ENCODE measurements at regions of chr15 and their contacts with region 1.

Region 1: GRCh38 chr15:56732921-56733797 is at the start of gene ZNF280D:
- DNase-seq: peak; percentile 73
- ATAC-seq: peak; percentile 84
- H3K4me3 ChIP-seq: peak within 1 kb of the TSS; percentile 95
- H3K27ac ChIP-seq: peak within 1 kb of the TSS; percentile 65
- H3K4me1 ChIP-seq: peaks cover 25% of the 10 kb centered on the region
- H3K27me3 ChIP-seq: no peaks in the 10 kb centered on the region
- CTCF ChIP-seq: no peak
- total RNA-seq, gene ZNF280D: 7.4 and 8.7 TPM in 2 replicates

Region 2: DNA sequence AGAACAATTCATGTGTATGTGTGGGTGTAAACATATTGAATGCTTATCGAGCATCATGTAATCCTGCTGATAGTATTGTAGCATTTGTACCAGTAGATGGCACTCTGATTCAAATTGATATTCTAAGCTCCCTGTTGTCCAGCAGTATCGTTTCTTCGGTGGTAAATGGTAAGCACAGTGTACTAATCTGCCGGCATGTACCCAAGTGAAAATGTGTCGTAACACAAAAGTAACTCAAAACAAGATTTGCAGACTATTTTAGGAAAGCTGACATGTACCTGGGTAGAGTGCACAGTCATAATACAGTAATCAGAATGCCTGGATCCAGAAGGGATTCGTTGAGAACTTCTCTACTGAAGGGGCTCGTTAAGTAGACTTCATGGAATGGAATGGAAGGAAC is 236.5 kb before region 1 on chr15:
- CTCF ChIA-PET with region 1: no interaction called
- POLR2A ChIA-PET with region 1: no interaction called
- intact Hi-C with region 1: loop called (anchors 2 kb)
- DNase-seq: peak; percentile 73
- ATAC-seq: peak; percentile 82
- H3K4me3 ChIP-seq: peak overlapping the region; percentile 40; the same call in 1 of the 2 replicates
- H3K27ac ChIP-seq: no peak overlapping the region
- H3K4me1 ChIP-seq: peaks cover 23% of the 10 kb centered on the region; the same call in 1 of the 2 replicates
- H3K27me3 ChIP-seq: no peaks in the 10 kb centered on the region
- CTCF ChIP-seq: peak; percentile 75

Region 3: DNA sequence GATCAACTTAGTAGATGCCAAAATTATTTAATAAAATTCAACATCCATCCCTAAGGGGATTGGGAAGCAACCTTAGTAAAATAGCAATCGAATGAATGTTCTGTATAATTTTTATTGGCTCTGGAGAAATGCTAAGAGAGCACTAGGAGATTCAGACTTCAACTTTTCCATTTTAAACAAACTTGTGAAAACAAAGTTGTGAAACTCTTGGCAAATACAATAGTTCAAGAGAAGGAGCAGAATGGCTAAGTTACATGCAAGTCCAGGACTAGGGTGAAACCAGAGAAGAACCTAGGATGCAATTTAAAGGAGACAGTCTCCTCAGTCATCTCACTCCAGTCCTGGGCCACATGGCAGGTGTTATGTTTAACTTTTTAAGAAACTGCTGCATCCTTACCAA is 16.8 kb after region 1 on chr15:
- CTCF ChIA-PET with region 1: no interaction called
- POLR2A ChIA-PET with region 1: no interaction called
- intact Hi-C with region 1: no loop called
- DNase-seq: no peak
- ATAC-seq: no peak
- H3K4me3 ChIP-seq: no peak overlapping the region
- H3K27ac ChIP-seq: no peak overlapping the region
- H3K4me1 ChIP-seq: no peaks in the 10 kb centered on the region
- H3K27me3 ChIP-seq: no peaks in the 10 kb centered on the region
- CTCF ChIP-seq: no peak

Region 4: DNA sequence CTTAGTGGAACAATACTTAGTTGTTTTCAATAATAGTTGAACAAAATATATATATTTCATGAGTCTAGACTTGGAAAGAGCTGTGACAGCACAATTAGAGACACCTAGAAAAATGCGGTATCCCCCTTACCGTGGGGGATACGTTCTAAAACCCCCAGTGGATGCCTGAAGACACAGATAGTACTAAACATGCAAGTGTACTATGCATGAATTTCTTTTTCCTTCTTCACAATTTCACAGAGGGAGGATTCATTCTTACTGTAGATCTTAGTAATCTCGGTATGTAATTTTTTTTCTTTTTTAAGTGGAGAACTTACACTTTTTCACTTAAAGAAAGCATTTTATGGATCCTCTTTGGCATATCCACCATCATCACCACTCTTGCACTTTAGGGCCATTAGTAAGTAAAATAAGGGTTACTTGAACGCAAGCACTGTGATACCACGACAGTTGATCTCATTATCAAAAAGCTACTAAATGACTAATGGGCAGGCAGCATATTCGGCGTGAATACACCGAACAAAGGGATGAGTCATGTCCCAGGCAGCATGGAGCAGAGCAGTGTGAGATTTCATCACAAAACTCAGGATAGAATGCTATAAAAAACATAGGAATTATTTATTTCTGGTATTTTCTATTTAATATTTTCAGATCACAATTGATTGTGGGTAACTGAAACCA is 72.4 kb after region 1 on chr15:
- CTCF ChIA-PET with region 1: no interaction called
- POLR2A ChIA-PET with region 1: no interaction called
- intact Hi-C with region 1: loop called (anchors 5 kb)
- DNase-seq: peak; percentile 71
- ATAC-seq: peak; percentile 96
- H3K4me3 ChIP-seq: peak overlapping the region; percentile 58
- H3K27ac ChIP-seq: peak overlapping the region; percentile 10
- H3K4me1 ChIP-seq: peaks cover 13% of the 10 kb centered on the region
- H3K27me3 ChIP-seq: no peaks in the 10 kb centered on the region
- CTCF ChIP-seq: no peak

Measured in PC-3 (cell line).